ENCODE measurements at regions of chr12 and their contacts with region 1.

Region 1: GRCh38 chr12:9741726-9742125 is 8.8 kb upstream of the CLECL1 start:
- DNase-seq: peak; percentile 94
- H3K4me3 Mint-ChIP-seq: peak overlapping the region; percentile 57
- H3K27ac Mint-ChIP-seq: peak overlapping the region; percentile 96
- H3K4me1 Mint-ChIP-seq: peaks cover 61% of the 10 kb centered on the region
- H3K27me3 Mint-ChIP-seq: no peaks in the 10 kb centered on the region

Region 2: GRCh38 chr12:9449181-9449580 is 292.5 kb before region 1 on chr12:
- intact Hi-C with region 1: loop called (anchors 5 kb)
- DNase-seq: no peak
- H3K4me3 Mint-ChIP-seq: peak overlapping the region; percentile 99
- H3K27ac Mint-ChIP-seq: no peak overlapping the region
- H3K4me1 Mint-ChIP-seq: peaks cover 21% of the 10 kb centered on the region
- H3K27me3 Mint-ChIP-seq: peaks cover 2% of the 10 kb centered on the region

Region 3: DNA sequence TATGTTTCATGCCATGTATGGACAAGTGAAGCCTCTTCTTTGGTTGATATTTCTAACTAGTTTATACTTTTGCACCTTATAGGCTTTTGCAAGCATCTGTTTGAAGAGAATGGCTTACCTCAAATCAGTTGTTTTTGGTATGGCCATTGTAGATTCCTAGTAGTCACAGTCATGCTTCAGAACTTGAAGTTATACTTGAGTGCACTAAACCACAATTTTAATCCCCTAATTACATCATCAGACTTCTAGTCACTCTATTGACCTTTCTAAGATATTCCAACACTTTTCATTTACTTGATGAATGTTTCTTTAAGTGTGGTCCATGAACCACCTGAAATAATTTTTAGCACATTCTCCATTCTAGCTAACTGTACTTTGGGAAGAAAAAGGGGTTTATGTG is 115.4 kb before region 1 on chr12:
- intact Hi-C with region 1: no loop called
- DNase-seq: no peak
- H3K4me3 Mint-ChIP-seq: no peak overlapping the region
- H3K27ac Mint-ChIP-seq: no peak overlapping the region
- H3K4me1 Mint-ChIP-seq: peaks cover 4% of the 10 kb centered on the region
- H3K27me3 Mint-ChIP-seq: peaks cover 4% of the 10 kb centered on the region

Region 4: GRCh38 chr12:9707864-9708808 is 33.6 kb before region 1 on chr12:
- intact Hi-C with region 1: loop called (anchors 2 kb)
- DNase-seq: peak; percentile 89
- H3K4me3 Mint-ChIP-seq: peak overlapping the region; percentile 77
- H3K27ac Mint-ChIP-seq: peak overlapping the region; percentile 86
- H3K4me1 Mint-ChIP-seq: peaks cover 44% of the 10 kb centered on the region
- H3K27me3 Mint-ChIP-seq: no peaks in the 10 kb centered on the region

Region 5: DNA sequence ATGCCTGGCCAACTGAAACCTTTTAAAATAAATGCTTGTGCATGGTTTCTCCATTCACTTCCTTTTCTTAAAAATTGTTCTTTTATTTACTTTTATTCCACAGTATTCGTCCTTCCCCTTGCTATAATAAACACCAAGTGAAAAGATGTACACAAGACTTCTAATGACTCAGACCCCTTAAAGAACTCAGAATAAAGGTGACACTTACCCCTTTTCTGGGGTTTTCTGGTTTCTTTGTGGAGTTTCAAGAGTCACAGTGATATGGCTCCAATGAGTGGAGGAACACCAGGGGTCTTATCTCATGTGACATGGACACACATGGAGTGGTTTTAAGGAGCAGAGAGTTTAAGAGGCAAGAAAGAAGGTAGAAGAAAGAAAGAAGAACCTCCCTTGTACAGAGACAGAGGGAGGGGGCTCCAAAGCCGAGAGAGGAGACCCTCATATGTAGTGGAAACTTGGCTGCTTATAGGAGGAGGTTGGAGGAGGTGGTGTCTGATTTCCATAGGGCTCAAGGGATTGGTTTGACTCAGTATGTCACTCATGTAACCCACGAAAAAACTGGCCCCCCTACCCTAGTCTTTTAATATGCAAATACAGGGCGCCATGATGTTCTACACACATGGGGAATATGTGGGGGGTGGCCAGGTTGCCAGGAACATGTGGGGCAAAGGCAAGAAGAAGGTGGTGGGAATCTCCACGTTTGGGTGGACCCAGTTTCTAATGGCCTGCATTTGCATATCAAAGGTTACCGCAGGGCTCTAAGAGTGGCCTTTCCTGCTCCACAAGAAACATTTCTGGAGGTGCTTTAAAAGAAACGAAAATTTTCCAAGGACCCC is 41.0 kb after region 1 on chr12:
- intact Hi-C with region 1: no loop called
- DNase-seq: no peak
- H3K4me3 Mint-ChIP-seq: no peak overlapping the region
- H3K27ac Mint-ChIP-seq: no peak overlapping the region
- H3K4me1 Mint-ChIP-seq: peaks cover 34% of the 10 kb centered on the region
- H3K27me3 Mint-ChIP-seq: no peaks in the 10 kb centered on the region

Region 6: GRCh38 chr12:9797722-9798619 is 56.2 kb after region 1 on chr12:
- intact Hi-C with region 1: loop called (anchors 1 kb)
- DNase-seq: peak; percentile 92
- H3K4me3 Mint-ChIP-seq: peak overlapping the region; percentile 81
- H3K27ac Mint-ChIP-seq: peak overlapping the region; percentile 78
- H3K4me1 Mint-ChIP-seq: peaks cover 43% of the 10 kb centered on the region
- H3K27me3 Mint-ChIP-seq: peaks cover 8% of the 10 kb centered on the region

Region 7: GRCh38 chr12:10016881-10017280 is 275.2 kb after region 1 on chr12:
- intact Hi-C with region 1: loop called (anchors 10 kb)
- DNase-seq: no peak
- H3K4me3 Mint-ChIP-seq: no peak overlapping the region
- H3K27ac Mint-ChIP-seq: no peak overlapping the region
- H3K4me1 Mint-ChIP-seq: no peaks in the 10 kb centered on the region
- H3K27me3 Mint-ChIP-seq: peaks cover 28% of the 10 kb centered on the region

Measured in activated CD4-positive, alpha-beta T cell treated with anti-CD3 and anti-CD28 coated beads, Interleukin-2, amount 10 ng/mL, durations not matched to agents 24 days and 14 days (primary cell).